ENCODE measurements at regions of chr12 and their contacts with region 1.

Region 1: GRCh38 chr12:40921563-40922163 is 229.4 kb downstream of the CNTN1 start:
- DNase-seq: no peak
- H3K4me3 ChIP-seq: no peak overlapping the region
- H3K27ac ChIP-seq: no peak overlapping the region
- H3K4me1 ChIP-seq: no peaks in the 10 kb centered on the region
- H3K27me3 ChIP-seq: no peaks in the 10 kb centered on the region
- CTCF ChIP-seq: peak; percentile 41 to 81 (median 53)
- POLR2A ChIP-seq: no peak

Region 2: DNA sequence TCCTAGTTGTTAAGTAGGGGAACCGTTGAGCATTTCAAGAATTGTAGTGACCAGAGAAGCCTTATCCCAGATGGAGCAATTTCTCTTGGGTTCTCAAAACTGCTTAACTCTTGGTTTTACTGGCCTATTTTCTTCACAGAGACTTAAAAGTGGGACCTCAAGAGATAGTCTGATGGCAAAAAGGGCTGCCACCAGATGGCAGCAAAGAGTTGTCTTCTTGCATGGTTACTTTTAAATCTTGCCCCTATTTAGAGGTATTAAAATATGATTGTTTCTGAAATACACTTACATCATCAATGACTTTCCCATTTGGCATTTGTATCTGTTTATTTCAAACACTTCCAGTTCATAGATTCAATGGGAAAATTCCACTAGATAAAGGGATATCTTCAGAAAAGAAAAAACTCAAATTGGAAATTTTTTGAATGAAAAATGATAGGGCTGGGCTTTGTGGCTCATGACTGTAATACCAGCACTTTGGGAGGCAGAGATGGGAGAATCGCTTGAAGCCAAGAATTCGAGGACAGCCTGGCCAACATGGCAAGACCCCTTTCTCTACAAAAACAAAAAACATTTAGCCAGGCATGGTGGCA is 299.3 kb before region 1 on chr12:
- intact Hi-C with region 1: loop called (anchors 5 kb)
- DNase-seq: peak; percentile 91
- H3K4me3 ChIP-seq: no peak overlapping the region
- H3K27ac ChIP-seq: no peak overlapping the region
- H3K4me1 ChIP-seq: no peaks in the 10 kb centered on the region
- H3K27me3 ChIP-seq: no peaks in the 10 kb centered on the region
- CTCF ChIP-seq: peak; percentile 67 to 83 (median 80)
- POLR2A ChIP-seq: no peak